ENCODE measurements at regions of chr10 and their contacts with region 1.

Region 1: GRCh38 chr10:78657163-78657861 is 411.5 kb upstream of the ZMIZ1 start:
- DNase-seq: peak; percentile 81
- H3K4me3 Mint-ChIP-seq: no peak overlapping the region
- H3K27ac Mint-ChIP-seq: no peak overlapping the region
- H3K4me1 Mint-ChIP-seq: no peaks in the 10 kb centered on the region
- H3K27me3 Mint-ChIP-seq: peaks cover 8% of the 10 kb centered on the region

Region 2: GRCh38 chr10:78211561-78212051 is 445.7 kb before region 1 on chr10:
- CTCF ChIA-PET with region 1: no interaction called
- POLR2A ChIA-PET with region 1: no interaction called
- intact Hi-C with region 1: loop called (anchors 5 kb)
- DNase-seq: no peak
- H3K4me3 Mint-ChIP-seq: no peak overlapping the region
- H3K27ac Mint-ChIP-seq: no peak overlapping the region
- H3K4me1 Mint-ChIP-seq: no peaks in the 10 kb centered on the region
- H3K27me3 Mint-ChIP-seq: peaks cover 6% of the 10 kb centered on the region

Region 3: GRCh38 chr10:78745441-78745840 is 88.1 kb after region 1 on chr10:
- CTCF ChIA-PET with region 1: no interaction called
- POLR2A ChIA-PET with region 1: no interaction called
- intact Hi-C with region 1: no loop called
- DNase-seq: no peak
- H3K4me3 Mint-ChIP-seq: no peak overlapping the region
- H3K27ac Mint-ChIP-seq: no peak overlapping the region
- H3K4me1 Mint-ChIP-seq: peaks cover 7% of the 10 kb centered on the region
- H3K27me3 Mint-ChIP-seq: peaks cover 7% of the 10 kb centered on the region

Region 4: DNA sequence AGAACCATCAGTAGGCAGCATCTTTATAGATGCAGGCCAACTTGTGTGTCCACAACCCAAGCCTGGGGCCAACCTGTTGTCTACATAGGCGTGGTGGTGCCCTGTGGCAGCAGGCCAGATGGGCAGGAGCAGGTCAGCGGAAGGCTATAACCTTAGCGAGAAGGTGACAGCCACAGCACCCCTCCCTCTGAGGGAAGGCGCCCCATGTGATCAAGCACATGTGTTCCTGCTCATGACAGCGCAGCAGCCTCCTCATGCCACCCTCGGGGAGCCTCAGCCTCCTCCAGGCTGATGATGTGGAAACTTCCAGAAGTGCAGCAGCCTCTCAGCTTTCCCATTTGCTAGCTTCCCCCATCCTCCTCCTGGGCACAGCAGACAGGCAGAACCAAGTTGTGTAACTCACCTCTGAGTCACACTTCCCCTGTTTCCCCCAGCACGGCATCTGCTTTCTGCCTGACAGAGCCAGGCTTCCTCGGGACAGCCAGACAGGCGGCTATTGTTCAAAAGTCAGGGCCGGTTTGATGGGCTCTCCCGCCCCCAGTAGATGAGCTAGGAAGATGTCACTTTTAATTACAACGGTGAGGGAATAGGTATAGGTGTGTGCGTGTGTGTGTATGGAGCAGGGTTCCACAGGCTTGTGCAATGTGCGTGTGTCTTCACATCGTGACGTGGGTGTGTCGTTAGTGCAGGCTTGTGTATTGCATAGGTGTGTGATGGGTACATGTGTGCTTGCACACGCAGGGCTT is 99.5 kb after region 1 on chr10:
- CTCF ChIA-PET with region 1: no interaction called
- POLR2A ChIA-PET with region 1: no interaction called
- intact Hi-C with region 1: no loop called
- DNase-seq: peak; percentile 60
- H3K4me3 Mint-ChIP-seq: no peak overlapping the region
- H3K27ac Mint-ChIP-seq: no peak overlapping the region
- H3K4me1 Mint-ChIP-seq: peaks cover 15% of the 10 kb centered on the region
- H3K27me3 Mint-ChIP-seq: peaks cover 19% of the 10 kb centered on the region